Heart left ventricle (tissue), 16 donors: ENCODE measurements at regions of chr4 and their contacts with region 1.

Region 1: DNA sequence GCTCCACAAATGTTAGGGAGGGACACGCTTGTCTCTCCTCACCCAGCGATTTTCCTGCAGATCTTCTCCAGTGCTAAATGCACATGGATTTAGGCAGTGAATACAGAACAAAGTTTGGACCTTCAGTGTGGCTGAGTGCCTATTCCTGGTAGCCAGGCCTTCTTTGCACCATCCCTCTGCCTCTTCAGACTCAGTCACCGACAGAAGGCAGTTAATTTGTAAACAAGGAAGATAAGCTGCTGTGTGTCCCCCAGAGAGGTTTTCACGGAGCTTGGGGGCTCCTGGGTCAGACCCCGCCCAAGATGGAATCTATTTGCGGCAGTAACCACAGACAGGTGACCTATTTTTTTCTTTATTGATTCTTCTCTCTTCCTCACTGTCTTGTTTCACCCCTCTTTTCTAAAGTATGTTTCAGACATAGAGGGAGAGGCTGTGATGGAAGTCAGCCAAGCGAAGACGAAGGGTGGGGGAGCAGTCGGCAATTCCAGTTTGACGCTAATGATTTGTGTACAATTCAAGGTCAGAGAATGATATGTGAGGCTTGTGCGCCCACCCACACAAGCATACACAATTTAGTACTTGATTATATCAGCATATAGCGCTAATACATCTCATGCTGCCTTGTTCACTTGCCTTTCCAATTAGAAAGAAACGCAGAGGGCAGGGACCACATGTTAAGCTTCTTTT is 200.8 kb downstream of the MGST2 start:
- DNase-seq: no peak
- ATAC-seq: no peak
- H3K4me3 ChIP-seq: no peak overlapping the region
- H3K27ac ChIP-seq: no peak overlapping the region
- H3K4me1 ChIP-seq: peaks cover 0 to under 1% (median 0%) of the 10 kb centered on the region in 12 donors
- H3K27me3 ChIP-seq: no peaks in the 10 kb centered on the region
- CTCF ChIP-seq: no peak
- POLR2A ChIP-seq: no peak

Region 2: GRCh38 chr4:138697851-138698250 is 1168.6 kb before region 1 on chr4:
- intact Hi-C with region 1: no loop called
- DNase-seq: no peak
- ATAC-seq: no peak
- H3K4me3 ChIP-seq: no peak overlapping the region
- H3K27ac ChIP-seq: no peak overlapping the region
- H3K4me1 ChIP-seq: peaks cover 0 to 5% (median 0%) of the 10 kb centered on the region in 12 donors
- H3K27me3 ChIP-seq: no peaks in the 10 kb centered on the region
- CTCF ChIP-seq: no peak
- POLR2A ChIP-seq: no peak

Region 3: GRCh38 chr4:139665690-139666529 is 200.5 kb before region 1 on chr4 and contains the start of gene MGST2:
- intact Hi-C with region 1: no loop called
- DNase-seq: peak; percentile 83 to 90 (median 89)
- ATAC-seq: peak; percentile 92 to 94 (median 93)
- H3K4me3 ChIP-seq: peak within 1 kb of the TSS; percentile 49 to 79 (median 58)
- H3K27ac ChIP-seq: peak within 1 kb of the TSS; percentile 76 to 95 (median 93)
- H3K4me1 ChIP-seq: peaks cover 3 to 61% (median 27%) of the 10 kb centered on the region in 12 donors
- H3K27me3 ChIP-seq: no peaks in the 10 kb centered on the region
- CTCF ChIP-seq: peak in 1 of 12 donors; percentile 7
- POLR2A ChIP-seq: peak in 1 of 2 donors; percentile 44
- total RNA-seq, gene MGST2: 94.7 to 122 (median 105) TPM

Region 4: GRCh38 chr4:139740531-139741041 is 125.8 kb before region 1 on chr4:
- intact Hi-C with region 1: loop called in 2 of 10 experiments (anchors 5 kb)
- DNase-seq: peak; percentile 77 to 83 (median 82)
- ATAC-seq: peak; percentile 88 to 97 (median 96)
- H3K4me3 ChIP-seq: peak overlapping the region in 8 of 12 donors; percentile 12 to 23 (median 14)
- H3K27ac ChIP-seq: peak overlapping the region; percentile 26 to 91 (median 84)
- H3K4me1 ChIP-seq: peaks cover 0 to 62% (median 33%) of the 10 kb centered on the region in 12 donors
- H3K27me3 ChIP-seq: no peaks in the 10 kb centered on the region
- CTCF ChIP-seq: peak in 6 of 12 donors; percentile 12 to 56 (median 23)
- POLR2A ChIP-seq: peak in 1 of 2 donors; percentile 15

Region 5: DNA sequence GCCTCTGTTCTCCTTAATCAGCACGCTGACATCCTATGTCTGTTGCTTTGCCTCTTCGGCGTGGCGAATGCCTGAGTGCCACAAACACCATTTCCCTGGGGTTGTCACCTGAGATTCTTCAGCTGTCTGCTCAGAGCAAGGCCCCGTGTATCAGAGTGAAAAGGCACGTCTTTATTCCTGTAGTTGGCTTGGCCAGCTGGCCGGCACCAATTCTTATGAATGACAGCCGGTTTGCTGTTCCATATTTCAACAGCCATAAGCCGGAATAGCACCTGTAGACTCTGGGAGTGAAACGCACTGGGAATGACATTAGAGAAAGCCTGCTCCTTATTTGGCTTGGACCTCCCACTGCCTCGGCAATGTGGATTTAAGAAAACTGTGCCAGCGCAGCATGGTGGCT is 111.5 kb before region 1 on chr4:
- intact Hi-C with region 1: loop called in 1 of 10 experiments (anchors 10 kb)
- DNase-seq: no peak
- ATAC-seq: no peak
- H3K4me3 ChIP-seq: no peak overlapping the region
- H3K27ac ChIP-seq: no peak overlapping the region
- H3K4me1 ChIP-seq: peaks cover 0 to 9% (median 0%) of the 10 kb centered on the region in 12 donors
- H3K27me3 ChIP-seq: no peaks in the 10 kb centered on the region
- CTCF ChIP-seq: no peak
- POLR2A ChIP-seq: no peak